HCT116 (cell line): ENCODE measurements at regions of chr16 and their contacts with region 1.

Region 1: DNA sequence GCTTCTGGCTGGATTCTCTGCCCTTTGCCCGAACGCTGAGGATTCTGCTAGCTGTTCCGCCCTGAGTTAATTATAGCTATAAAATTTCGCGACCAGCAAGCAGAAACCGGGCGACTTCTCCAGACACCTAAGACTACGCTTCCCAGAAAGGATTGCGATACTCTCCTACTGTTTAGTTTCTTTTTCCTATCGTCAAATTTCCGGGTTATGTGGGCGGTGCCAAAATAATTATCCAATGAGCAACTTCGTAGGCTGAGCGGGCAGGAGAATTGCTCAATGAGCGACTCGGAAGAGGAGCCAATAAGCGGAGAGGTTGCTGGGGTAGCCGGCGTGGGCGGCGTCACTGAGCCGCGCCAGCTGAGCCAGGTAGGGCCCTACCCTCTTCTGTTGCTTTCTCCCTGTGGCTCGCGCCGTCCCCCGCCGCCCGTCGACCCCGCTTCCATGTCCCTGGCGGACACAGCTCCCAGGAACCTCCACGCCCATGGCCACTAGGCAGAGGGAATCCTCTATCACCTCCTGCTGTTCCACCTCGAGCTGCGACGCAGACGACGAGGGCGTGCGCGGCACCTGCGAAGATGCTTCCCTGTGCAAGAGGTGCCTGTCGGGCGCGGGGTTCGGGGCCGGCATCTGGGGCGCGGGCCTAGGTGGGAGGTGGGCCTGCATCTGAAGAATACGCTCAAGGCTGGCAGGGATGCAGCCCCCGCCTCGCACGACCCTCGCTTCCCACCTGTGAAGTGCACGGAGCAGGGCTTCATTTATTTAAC is at the start of gene LCMT1:
- DNase-seq: peak; percentile 96
- ATAC-seq: peak; percentile 78
- H3K4me3 ChIP-seq: peak within 1 kb of the TSS; percentile 81 to 97
- H3K27ac ChIP-seq: peak within 1 kb of the TSS; percentile 83
- H3K4me1 ChIP-seq: peaks cover 32 to 45% of the 10 kb centered on the region in 2 experiments
- H3K27me3 ChIP-seq: no peaks in the 10 kb centered on the region
- CTCF ChIP-seq: no peak
- POLR2A ChIP-seq: no peak
- RAD21 ChIP-seq: no peak
- total RNA-seq, gene LCMT1: 52.4 TPM

Region 2: GRCh38 chr16:24516900-24517669 is 594.5 kb before region 1 on chr16:
- CTCF ChIA-PET with region 1: interaction called, 7 read pairs
- POLR2A ChIA-PET with region 1: no interaction called
- RAD21 ChIA-PET with region 1: no interaction called
- intact Hi-C with region 1: loop called (anchors 5 kb)
- DNase-seq: peak; percentile 78
- ATAC-seq: peak; percentile 95
- H3K4me3 ChIP-seq: peak overlapping the region; percentile 34
- H3K27ac ChIP-seq: no peak overlapping the region
- H3K4me1 ChIP-seq: peaks cover 0 to 6% of the 10 kb centered on the region in 2 experiments; a peak in 1 of 4 replicates
- H3K27me3 ChIP-seq: no peaks in the 10 kb centered on the region
- CTCF ChIP-seq: peak; percentile 92 to 98 (median 95)
- POLR2A ChIP-seq: no peak
- RAD21 ChIP-seq: peak; percentile 90

Region 3: GRCh38 chr16:24834459-24835335 is 276.9 kb before region 1 on chr16:
- CTCF ChIA-PET with region 1: interaction called, 4 read pairs
- POLR2A ChIA-PET with region 1: no interaction called
- RAD21 ChIA-PET with region 1: interaction called in 1 of 2 experiments, 3 read pairs
- intact Hi-C with region 1: loop called (anchors 2 kb)
- DNase-seq: peak; percentile 18
- ATAC-seq: peak; percentile 92
- H3K4me3 ChIP-seq: no peak overlapping the region
- H3K27ac ChIP-seq: no peak overlapping the region
- H3K4me1 ChIP-seq: peaks cover 0 to 14% of the 10 kb centered on the region in 2 experiments; a peak in 2 of 4 replicates
- H3K27me3 ChIP-seq: no peaks in the 10 kb centered on the region
- CTCF ChIP-seq: peak; percentile 57 to 72 (median 57); a peak in 5 of 6 replicates
- POLR2A ChIP-seq: no peak
- RAD21 ChIP-seq: peak; percentile 81

Region 4: GRCh38 chr16:24906199-24907020 is 205.2 kb before region 1 on chr16:
- CTCF ChIA-PET with region 1: interaction called, 3 read pairs
- POLR2A ChIA-PET with region 1: no interaction called
- RAD21 ChIA-PET with region 1: no interaction called
- intact Hi-C with region 1: loop called (anchors 2 kb)
- DNase-seq: peak; percentile 19
- ATAC-seq: peak; percentile 73
- H3K4me3 ChIP-seq: no peak overlapping the region
- H3K27ac ChIP-seq: no peak overlapping the region
- H3K4me1 ChIP-seq: no peaks in the 10 kb centered on the region
- H3K27me3 ChIP-seq: no peaks in the 10 kb centered on the region
- CTCF ChIP-seq: peak; percentile 32 to 54 (median 46); a peak in 3 of 6 replicates
- POLR2A ChIP-seq: no peak
- RAD21 ChIP-seq: peak; percentile 46; the same call in 1 of the 2 replicates

Region 5: DNA sequence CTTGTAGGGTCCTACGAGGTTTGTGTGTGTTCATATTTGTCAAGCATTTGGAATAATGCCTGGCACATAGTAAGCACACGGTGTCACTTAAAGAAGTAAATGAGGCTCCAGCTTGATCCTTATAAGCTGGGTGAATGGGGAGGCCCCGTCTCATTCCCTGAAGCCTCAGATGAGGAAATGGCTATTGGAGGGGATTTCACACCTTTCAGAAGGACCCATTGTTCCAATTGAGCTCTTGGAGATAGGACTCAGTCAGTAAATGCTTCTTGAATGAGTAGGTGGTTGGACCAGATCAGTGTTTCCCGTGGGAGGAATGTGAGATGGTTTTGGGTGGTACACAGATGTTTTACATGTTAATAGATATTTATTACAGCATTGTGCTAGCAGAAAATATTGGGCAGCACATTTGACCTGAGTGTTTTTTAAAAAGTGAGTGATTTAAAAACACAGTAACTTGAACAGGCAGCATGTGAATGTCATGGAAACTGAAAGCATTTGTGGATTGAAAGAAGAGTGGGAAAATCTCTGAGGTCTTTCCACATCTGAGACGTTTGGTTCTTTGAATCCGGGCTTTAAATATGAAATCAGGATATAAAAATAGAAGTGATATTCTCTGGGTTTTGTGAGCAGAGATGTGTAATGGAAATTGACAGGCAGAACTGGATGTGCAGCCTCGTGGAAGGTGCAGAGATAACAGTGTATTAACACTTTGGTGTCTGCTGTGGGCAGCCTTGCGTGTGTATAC is 60.0 kb before region 1 on chr16:
- CTCF ChIA-PET with region 1: interaction called, 3 read pairs
- POLR2A ChIA-PET with region 1: interaction called, 5 read pairs
- RAD21 ChIA-PET with region 1: no interaction called
- intact Hi-C with region 1: loop called (anchors 1 kb)
- DNase-seq: no peak
- ATAC-seq: no peak
- H3K4me3 ChIP-seq: no peak overlapping the region
- H3K27ac ChIP-seq: no peak overlapping the region
- H3K4me1 ChIP-seq: peaks cover 25 to 47% of the 10 kb centered on the region in 2 experiments
- H3K27me3 ChIP-seq: no peaks in the 10 kb centered on the region
- CTCF ChIP-seq: no peak
- POLR2A ChIP-seq: no peak
- RAD21 ChIP-seq: no peak

Region 6: GRCh38 chr16:25177831-25178688 is 66.5 kb after region 1 on chr16:
- CTCF ChIA-PET with region 1: no interaction called
- POLR2A ChIA-PET with region 1: no interaction called
- RAD21 ChIA-PET with region 1: no interaction called
- intact Hi-C with region 1: no loop called
- DNase-seq: no peak
- ATAC-seq: no peak
- H3K4me3 ChIP-seq: no peak overlapping the region
- H3K27ac ChIP-seq: no peak overlapping the region
- H3K4me1 ChIP-seq: no peaks in the 10 kb centered on the region
- H3K27me3 ChIP-seq: no peaks in the 10 kb centered on the region
- CTCF ChIP-seq: no peak
- POLR2A ChIP-seq: no peak
- RAD21 ChIP-seq: no peak